Activated T-helper 2 cell treated with anti-CD3 and anti-CD28 coated beads, Interferon-gamma antibody, Interleukin-2, Interleukin-4, amounts not matched to agents 10 μg/mL and 5 μg/mL and 100 μg/mL, durations not matched to agents 14 hours and 24 hours and 36 hours (primary cell): ENCODE measurements at regions of chr3 and their contacts with region 1.

Region 1: GRCh38 chr3:185929192-185930151 is 8.3 kb downstream of the TRA2B start:
- DNase-seq: no peak
- H3K4me3 Mint-ChIP-seq: peak overlapping the region; percentile 80
- H3K27ac Mint-ChIP-seq: peak overlapping the region; percentile 92
- H3K4me1 Mint-ChIP-seq: peaks cover 83% of the 10 kb centered on the region
- H3K27me3 Mint-ChIP-seq: no peaks in the 10 kb centered on the region

Region 2: GRCh38 chr3:185914911-185915629 is 14.4 kb before region 1 on chr3:
- intact Hi-C with region 1: loop called (anchors 2 kb)
- DNase-seq: no peak
- H3K4me3 Mint-ChIP-seq: no peak overlapping the region
- H3K27ac Mint-ChIP-seq: no peak overlapping the region
- H3K4me1 Mint-ChIP-seq: peaks cover 6% of the 10 kb centered on the region
- H3K27me3 Mint-ChIP-seq: no peaks in the 10 kb centered on the region

Region 3: GRCh38 chr3:186185194-186185787 is 255.8 kb after region 1 on chr3:
- intact Hi-C with region 1: no loop called
- DNase-seq: no peak
- H3K4me3 Mint-ChIP-seq: no peak overlapping the region
- H3K27ac Mint-ChIP-seq: no peak overlapping the region
- H3K4me1 Mint-ChIP-seq: peaks cover 8% of the 10 kb centered on the region
- H3K27me3 Mint-ChIP-seq: peaks cover 33% of the 10 kb centered on the region